Lower leg skin (tissue), 4 donors: ENCODE measurements at regions of chr16 and their contacts with region 1.

Region 1: DNA sequence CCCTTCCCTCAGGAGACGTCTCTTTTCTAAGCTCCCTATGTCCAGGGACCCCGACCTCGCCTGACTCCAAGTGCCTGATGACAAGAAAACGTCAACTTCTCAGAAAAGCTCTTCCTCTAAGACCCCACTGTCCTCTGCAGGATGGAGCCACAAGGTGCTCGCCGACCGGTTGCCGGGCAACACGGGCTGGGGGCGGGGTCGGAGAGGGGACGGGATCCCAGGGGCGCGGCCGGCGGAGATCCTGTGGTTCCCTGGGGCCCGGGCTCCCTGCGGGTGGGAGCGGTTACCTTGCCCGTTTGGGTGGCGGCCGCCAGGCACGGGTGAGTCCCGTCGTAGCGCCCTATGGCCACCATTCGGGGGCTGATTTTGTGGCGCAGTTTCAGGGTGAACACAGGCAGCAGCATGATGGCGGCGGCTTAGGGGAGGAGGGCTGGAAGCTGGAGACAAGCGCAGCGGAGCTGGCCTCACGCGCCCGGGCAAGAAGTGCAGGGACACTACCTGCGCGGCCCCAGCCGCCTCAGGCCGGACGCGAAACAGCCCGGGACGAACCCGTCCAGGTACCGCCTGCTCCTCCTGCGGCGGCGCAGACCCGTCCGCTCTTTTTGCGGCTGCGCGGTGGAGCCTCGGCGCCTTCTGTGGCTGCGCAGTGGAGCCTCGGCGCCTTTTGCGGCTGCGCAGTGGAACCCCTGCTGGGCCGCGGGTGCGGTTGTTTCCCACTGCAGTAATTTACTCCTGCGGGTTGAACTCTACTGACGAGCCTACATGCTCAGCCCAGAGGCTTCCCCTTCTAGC is at the start of gene BBS2:
- DNase-seq: peak; percentile 83 to 97
- H3K4me3 ChIP-seq: peak within 1 kb of the TSS; percentile 76
- CTCF ChIP-seq: no peak
- POLR2A ChIP-seq: no peak
- total RNA-seq, gene BBS2: 76.6 to 106 (median 92.4) TPM

Region 2: DNA sequence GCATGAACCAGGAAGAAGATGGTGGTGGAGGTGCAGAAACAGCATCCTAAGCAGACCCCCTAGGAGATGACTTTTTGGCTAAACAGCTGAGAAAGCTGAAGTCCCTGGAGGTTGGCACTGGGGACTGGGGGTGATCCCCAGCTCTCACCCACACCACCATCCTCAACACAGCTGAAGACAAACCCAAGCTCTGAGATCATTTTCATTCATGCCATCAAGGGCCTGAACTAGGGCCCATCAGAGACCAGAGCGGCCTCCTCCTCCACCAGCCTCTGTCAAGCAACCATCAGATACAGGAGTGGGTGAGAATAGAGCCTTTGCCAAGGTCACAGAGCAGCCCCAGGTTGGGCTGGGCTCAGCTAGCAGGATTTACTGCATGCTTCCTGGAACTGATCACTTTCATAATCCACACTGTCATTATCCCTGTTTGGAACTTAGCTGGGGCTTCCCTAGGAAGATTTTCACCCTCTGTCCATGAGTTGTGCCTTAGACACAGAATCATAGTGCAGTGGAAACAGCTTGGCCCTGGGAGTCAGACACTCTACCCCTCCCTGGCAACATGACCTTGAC is 50.2 kb after region 1 on chr16:
- intact Hi-C with region 1: no loop called
- DNase-seq: no peak
- H3K4me3 ChIP-seq: no peak overlapping the region
- CTCF ChIP-seq: no peak
- POLR2A ChIP-seq: no peak

Region 3: GRCh38 chr16:56608043-56608875 is 88.6 kb after region 1 on chr16 and contains the start of gene MT2A:
- intact Hi-C with region 1: loop called (anchors 10 kb)
- DNase-seq: peak; percentile 94 to 99
- H3K4me3 ChIP-seq: peak within 1 kb of the TSS; percentile 67
- CTCF ChIP-seq: peak in 1 of 3 donors; percentile 22
- POLR2A ChIP-seq: peak in 1 of 2 donors; percentile 36
- total RNA-seq, gene MT2A: 35.8 to 190 (median 135) TPM

Region 4: GRCh38 chr16:56708525-56709442 is 189.1 kb after region 1 on chr16:
- intact Hi-C with region 1: loop called (anchors 10 kb)
- DNase-seq: peak in 1 of 2 donors; percentile 76
- H3K4me3 ChIP-seq: no peak overlapping the region
- CTCF ChIP-seq: no peak
- POLR2A ChIP-seq: no peak